Caco-2 (cell line): ENCODE measurements at regions of chrX and their contacts with region 1.

Region 1: GRCh38 chrX:41481264-41482109 is 34.3 kb downstream of the NYX start:
- DNase-seq: peak; percentile 42 to 46
- H3K4me3 ChIP-seq: no peak overlapping the region
- H3K4me3 Mint-ChIP-seq: peak overlapping the region; percentile 59
- H3K27ac Mint-ChIP-seq: peak overlapping the region; percentile 97
- H3K4me1 ChIP-seq: peaks cover 35% of the 10 kb centered on the region
- H3K4me1 Mint-ChIP-seq: peaks cover 9% of the 10 kb centered on the region
- H3K27me3 ChIP-seq: no peaks in the 10 kb centered on the region
- H3K27me3 Mint-ChIP-seq: no peaks in the 10 kb centered on the region
- CTCF ChIP-seq: peak in 1 of 2 experiments; percentile 11

Region 2: DNA sequence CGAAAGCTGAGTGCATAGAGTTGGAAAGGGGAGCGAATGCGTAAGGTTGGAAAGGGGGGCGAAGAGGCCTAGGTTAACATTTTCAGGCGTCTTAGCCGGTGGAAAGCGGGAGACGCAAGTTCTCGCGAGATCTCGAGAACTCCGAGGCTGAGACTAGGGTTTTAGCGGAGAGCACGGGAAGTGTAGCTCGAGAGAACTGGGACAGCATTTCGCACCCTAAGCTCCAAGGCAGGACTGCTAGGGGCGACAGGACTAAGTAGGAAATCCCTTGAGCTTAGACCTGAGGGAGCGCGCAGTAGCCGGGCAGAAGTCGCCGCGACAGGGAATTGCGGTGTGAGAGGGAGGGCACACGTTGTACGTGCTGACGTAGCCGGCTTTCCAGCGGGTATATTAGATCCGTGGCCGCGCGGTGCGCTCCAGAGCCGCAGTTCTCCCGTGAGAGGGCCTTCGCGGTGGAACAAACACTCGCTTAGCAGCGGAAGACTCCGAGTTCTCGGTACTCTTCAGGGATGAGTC is 147.7 kb before region 1 on chrX and contains the start of gene DDX3X:
- CTCF ChIA-PET with region 1: no interaction called
- POLR2A ChIA-PET with region 1: no interaction called
- intact Hi-C with region 1: loop called (anchors 2 kb)
- DNase-seq: peak; percentile 83 to 84
- H3K4me3 ChIP-seq: peak within 1 kb of the TSS; percentile 85
- H3K4me3 Mint-ChIP-seq: peak within 1 kb of the TSS; percentile 88
- H3K27ac Mint-ChIP-seq: peak within 1 kb of the TSS; percentile 100
- H3K4me1 ChIP-seq: peaks cover 8% of the 10 kb centered on the region; the same call in 1 of the 2 replicates
- H3K4me1 Mint-ChIP-seq: no peaks in the 10 kb centered on the region
- H3K27me3 ChIP-seq: no peaks in the 10 kb centered on the region
- H3K27me3 Mint-ChIP-seq: no peaks in the 10 kb centered on the region
- CTCF ChIP-seq: no peak
- total RNA-seq, gene DDX3X: 281 and 302 TPM in 2 replicates

Region 3: GRCh38 chrX:41542151-41542935 is 60.9 kb after region 1 on chrX:
- CTCF ChIA-PET with region 1: no interaction called
- POLR2A ChIA-PET with region 1: no interaction called
- intact Hi-C with region 1: loop called (anchors 2 kb)
- DNase-seq: peak; percentile 67 to 75
- H3K4me3 ChIP-seq: no peak overlapping the region
- H3K4me3 Mint-ChIP-seq: no peak overlapping the region
- H3K27ac Mint-ChIP-seq: peak overlapping the region; percentile 10
- H3K4me1 ChIP-seq: peaks cover 27% of the 10 kb centered on the region
- H3K4me1 Mint-ChIP-seq: peaks cover 5% of the 10 kb centered on the region
- H3K27me3 ChIP-seq: no peaks in the 10 kb centered on the region
- H3K27me3 Mint-ChIP-seq: no peaks in the 10 kb centered on the region
- CTCF ChIP-seq: no peak

Region 4: GRCh38 chrX:41561045-41561444 is 79.6 kb after region 1 on chrX:
- CTCF ChIA-PET with region 1: no interaction called
- POLR2A ChIA-PET with region 1: no interaction called
- intact Hi-C with region 1: no loop called
- DNase-seq: no peak
- H3K4me3 ChIP-seq: no peak overlapping the region
- H3K4me3 Mint-ChIP-seq: no peak overlapping the region
- H3K27ac Mint-ChIP-seq: no peak overlapping the region
- H3K4me1 ChIP-seq: no peaks in the 10 kb centered on the region
- H3K4me1 Mint-ChIP-seq: peaks cover 8% of the 10 kb centered on the region
- H3K27me3 ChIP-seq: no peaks in the 10 kb centered on the region
- H3K27me3 Mint-ChIP-seq: no peaks in the 10 kb centered on the region
- CTCF ChIP-seq: no peak